Posterior vena cava (tissue), 2 donors: ENCODE measurements at regions of chr14 and their contacts with region 1.

Region 1: GRCh38 chr14:104137297-104138097 is 890 bp upstream of the KIF26A start:
- DNase-seq: peak; percentile 88

Region 2: DNA sequence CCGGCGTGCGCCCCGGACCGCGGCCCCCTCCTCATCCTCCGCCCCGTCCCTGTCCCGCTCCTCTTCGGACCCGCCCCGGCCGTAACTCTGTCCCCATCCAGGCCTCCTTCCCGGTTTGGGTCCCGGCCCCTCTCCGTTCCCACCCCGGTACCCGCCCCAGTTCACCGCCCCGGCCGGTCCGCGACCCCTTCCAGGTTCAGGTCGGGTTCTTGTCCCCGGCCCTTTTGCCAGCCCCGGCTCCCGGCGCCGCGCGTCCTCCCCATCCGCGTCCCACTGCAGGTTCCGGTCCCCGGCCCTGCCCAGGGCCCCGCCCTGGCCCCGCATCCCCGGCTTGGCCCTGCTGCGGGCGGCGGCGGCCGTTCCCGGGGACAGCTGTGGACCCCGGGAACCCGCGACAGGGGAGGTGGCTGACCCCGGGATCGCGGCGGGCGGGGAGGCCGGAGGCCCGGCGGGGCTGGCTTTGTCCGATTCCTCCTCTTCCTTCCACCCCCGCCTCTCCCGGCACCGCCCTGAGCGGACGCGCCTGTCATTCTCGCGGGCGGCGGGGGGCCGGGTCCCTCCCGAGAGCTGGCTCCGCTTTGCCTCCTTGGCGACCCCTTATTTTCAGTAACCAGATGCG is 507.9 kb before region 1 on chr14:
- intact Hi-C with region 1: loop called in 1 of 2 experiments (anchors 5 kb)
- DNase-seq: peak; percentile 89

Region 3: DNA sequence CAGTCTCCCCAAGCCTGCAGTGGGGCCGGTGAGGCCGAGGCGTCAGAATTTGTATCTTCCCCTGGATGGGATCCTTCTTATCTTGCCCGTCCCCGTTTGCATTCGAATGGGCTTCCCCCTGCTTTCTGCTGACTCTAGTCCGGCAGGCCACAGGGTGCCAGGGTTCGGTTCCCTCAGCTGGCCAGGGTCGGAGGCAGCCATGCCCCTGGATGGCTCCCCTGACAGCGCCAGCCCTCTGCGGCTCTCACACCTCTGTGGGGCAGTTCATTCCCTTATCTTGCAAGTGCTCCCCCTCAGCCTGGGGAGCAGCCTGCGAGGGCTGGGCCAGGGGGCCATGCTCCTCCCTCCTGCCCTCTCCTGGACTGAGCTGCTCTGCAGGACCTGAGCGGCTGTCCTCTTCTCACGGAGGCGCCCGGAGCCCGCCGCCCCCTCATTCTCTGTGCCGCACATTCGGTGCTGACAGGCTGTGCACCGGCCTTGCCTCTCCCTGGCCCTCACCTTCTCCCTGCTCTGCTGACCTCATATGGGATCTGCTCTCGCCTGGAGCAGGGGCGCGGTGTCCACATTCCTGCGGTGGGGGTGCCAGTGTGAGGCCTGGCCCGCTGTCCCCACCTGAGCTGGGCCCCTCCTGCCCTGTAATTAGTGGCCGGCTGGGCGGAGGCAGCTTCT is 33.7 kb after region 1 on chr14:
- intact Hi-C with region 1: no loop called
- DNase-seq: no peak

Region 4: DNA sequence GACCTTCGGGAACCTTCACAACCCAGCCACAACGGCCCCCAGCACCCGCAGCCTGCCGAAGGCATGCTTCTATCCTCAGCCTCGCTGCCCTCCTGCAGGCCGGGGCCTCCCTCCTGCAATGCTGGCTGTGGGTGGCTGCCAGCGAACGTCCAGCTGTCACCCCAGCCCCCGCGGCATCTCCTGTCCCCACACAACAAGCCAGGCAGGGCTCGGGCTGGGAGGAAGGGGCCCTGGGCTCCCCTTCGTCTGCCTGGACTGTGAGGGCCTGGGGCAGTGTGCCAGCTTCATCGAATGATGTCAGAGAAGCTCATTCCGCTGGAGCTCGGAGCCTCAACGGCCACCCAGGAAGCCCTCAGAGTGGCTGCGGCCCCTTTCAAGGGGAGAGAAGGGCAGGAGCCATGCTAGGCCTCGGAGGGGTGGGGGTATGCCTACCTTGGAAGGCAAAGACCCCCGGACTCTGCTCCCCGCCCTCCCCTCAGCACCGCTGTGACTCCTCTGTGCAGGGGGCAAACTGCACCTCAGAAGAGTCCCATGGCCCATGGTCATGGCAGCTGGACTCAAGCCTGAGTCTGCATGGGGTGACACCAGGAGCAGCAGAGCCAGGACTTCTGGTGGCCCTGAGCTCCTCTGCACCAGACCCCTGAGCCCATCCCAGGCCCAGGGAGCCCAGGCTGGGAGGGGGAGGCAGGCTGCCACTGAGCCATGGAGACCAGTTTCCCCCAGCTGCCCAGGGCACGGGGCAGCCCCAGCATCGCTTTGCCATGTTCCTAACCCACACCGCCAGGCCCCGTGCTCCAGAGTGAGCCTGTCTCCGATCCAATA is 417.3 kb after region 1 on chr14:
- intact Hi-C with region 1: loop called (anchors 5 kb)
- DNase-seq: peak; percentile 78

Region 5: DNA sequence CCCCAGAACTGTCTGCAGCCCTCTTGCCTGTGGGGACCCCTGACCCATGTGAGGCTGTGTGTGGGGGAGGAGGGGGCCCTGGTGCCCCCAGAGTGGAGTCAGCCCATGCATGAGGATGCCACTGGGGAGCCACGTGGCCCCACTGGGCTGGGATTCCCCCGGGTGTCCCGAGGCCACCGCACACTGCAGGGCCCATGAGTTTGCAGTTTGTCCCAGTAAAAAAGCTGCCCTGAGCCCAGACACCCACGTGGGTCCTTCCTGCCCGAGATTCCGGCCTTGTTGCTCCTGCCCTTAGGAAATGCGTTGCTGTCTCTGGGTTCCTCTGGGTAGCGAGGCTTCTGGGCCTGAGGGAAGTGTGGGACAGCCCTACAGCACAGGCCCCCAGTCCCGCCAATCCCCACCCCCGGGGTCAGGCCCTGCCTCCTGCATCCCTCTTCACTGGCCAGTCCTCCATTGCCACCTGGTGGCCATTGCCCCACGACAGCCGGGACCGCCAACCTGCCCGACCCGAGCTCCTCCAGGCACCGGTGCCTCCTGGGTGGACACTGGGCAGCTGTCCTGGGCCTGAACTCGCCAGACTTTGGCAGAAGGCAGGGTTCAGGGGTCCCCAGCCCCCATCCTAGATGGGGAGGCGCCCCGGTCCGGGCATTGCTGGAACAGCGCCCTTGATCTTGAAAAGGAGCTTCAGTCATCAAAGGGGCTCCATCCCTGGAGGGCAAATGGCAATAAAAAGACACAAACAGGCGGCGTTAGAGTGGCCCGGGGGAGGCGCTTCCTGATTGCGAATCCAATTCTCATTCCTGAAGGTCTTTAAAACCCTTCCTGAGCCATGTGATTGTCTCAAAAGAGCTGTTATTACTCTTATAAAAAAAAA is 426.5 kb after region 1 on chr14:
- intact Hi-C with region 1: loop called (anchors 1 to 5 kb)
- DNase-seq: peak; percentile 91

Region 6: DNA sequence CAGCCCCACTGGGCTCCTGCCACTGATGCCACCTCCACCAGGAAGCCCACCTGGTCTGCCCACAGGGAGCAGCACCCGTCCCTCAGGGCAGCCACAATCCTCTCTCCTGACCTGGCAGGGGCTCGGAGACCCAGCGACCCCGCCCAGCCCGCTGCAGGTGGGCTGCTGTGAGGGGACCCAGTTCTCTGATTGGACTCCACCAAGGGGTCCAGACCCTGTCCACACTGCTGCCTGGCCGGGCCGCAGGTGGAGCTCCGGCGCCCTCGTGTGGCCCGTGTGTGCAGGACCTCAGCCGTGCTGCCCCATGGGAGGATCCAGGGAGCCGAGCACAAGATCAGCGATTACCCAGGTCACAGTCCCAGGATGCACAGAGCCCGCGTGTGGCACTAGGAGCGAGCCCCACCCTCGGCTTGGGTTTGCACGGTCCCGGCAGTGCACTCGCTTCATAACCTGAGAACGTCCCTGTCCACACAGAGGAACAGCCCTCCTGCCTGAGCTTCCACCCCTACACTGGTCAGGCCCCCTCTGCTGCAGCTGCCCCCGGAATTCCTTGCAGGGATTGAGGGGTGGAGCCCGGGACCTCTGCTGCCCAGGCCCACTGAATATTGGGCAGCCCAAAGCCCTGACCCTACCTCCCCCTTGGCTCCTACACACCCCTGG is 502.5 kb after region 1 on chr14:
- intact Hi-C with region 1: loop called (anchors 5 kb)
- DNase-seq: no peak